Endothelial cell of umbilical vein (primary cell): ENCODE measurements at regions of chr2 and their contacts with region 1.

Region 1: GRCh38 chr2:44479122-44479887 is 117.6 kb downstream of the CAMKMT start:
- DNase-seq: peak; percentile 89
- H3K4me3 ChIP-seq: no peak overlapping the region
- H3K27ac ChIP-seq: no peak overlapping the region
- H3K4me1 ChIP-seq: no peaks in the 10 kb centered on the region
- H3K27me3 ChIP-seq: no peaks in the 10 kb centered on the region
- CTCF ChIP-seq: peak; percentile 97 to 99
- POLR2A ChIP-seq: no peak

Region 2: GRCh38 chr2:44044281-44044720 is 435.0 kb before region 1 on chr2:
- CTCF ChIA-PET with region 1: interaction called, 58 read pairs
- POLR2A ChIA-PET with region 1: no interaction called
- dilution Hi-C with region 1: no loop called
- intact Hi-C with region 1: loop called (anchors 1 kb)
- DNase-seq: peak; percentile 78
- H3K4me3 ChIP-seq: no peak overlapping the region
- H3K27ac ChIP-seq: no peak overlapping the region
- H3K4me1 ChIP-seq: no peaks in the 10 kb centered on the region
- H3K27me3 ChIP-seq: peaks cover 4 to 5% of the 10 kb centered on the region in 2 experiments
- CTCF ChIP-seq: peak; percentile 87 to 95
- POLR2A ChIP-seq: no peak

Region 3: GRCh38 chr2:44320832-44321231 is 158.5 kb before region 1 on chr2:
- CTCF ChIA-PET with region 1: no interaction called
- POLR2A ChIA-PET with region 1: no interaction called
- dilution Hi-C with region 1: no loop called
- intact Hi-C with region 1: no loop called
- DNase-seq: no peak
- H3K4me3 ChIP-seq: no peak overlapping the region
- H3K27ac ChIP-seq: no peak overlapping the region
- H3K4me1 ChIP-seq: no peaks in the 10 kb centered on the region
- H3K27me3 ChIP-seq: no peaks in the 10 kb centered on the region
- CTCF ChIP-seq: no peak
- POLR2A ChIP-seq: no peak

Region 4: GRCh38 chr2:44429034-44429433 is 50.3 kb before region 1 on chr2:
- CTCF ChIA-PET with region 1: interaction called, 14 read pairs
- POLR2A ChIA-PET with region 1: no interaction called
- dilution Hi-C with region 1: no loop called
- intact Hi-C with region 1: no loop called
- DNase-seq: no peak
- H3K4me3 ChIP-seq: no peak overlapping the region
- H3K27ac ChIP-seq: no peak overlapping the region
- H3K4me1 ChIP-seq: no peaks in the 10 kb centered on the region
- H3K27me3 ChIP-seq: no peaks in the 10 kb centered on the region
- CTCF ChIP-seq: no peak
- POLR2A ChIP-seq: no peak

Region 5: GRCh38 chr2:44515416-44515815 is 36.1 kb after region 1 on chr2:
- CTCF ChIA-PET with region 1: interaction called, 13 read pairs
- POLR2A ChIA-PET with region 1: no interaction called
- dilution Hi-C with region 1: no loop called
- intact Hi-C with region 1: no loop called
- DNase-seq: no peak
- H3K4me3 ChIP-seq: no peak overlapping the region
- H3K27ac ChIP-seq: no peak overlapping the region
- H3K4me1 ChIP-seq: no peaks in the 10 kb centered on the region
- H3K27me3 ChIP-seq: no peaks in the 10 kb centered on the region
- CTCF ChIP-seq: no peak
- POLR2A ChIP-seq: no peak

Region 6: DNA sequence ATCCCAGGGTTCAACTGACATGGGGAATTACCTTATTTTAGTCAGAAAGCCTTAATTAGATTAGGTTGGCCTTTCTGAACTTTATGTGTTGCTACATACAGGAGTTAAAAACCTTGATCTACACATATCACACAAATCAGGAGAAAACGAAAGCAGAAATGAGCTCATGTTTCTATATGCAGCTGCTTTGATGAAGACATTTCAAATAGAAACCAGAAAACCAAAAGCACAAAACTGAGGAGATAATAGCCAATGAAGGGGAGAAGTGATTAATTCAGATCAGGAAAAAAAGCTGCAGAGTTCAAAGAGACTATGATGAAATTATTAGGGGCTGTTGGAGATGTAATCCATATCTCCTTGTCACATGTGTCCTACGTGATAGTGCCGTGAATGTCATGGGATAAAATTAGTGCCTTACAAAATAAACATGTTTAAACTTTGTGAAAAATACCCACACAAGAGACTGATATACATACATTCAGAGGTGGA is 137.4 kb after region 1 on chr2:
- CTCF ChIA-PET with region 1: interaction called, 11 read pairs
- POLR2A ChIA-PET with region 1: no interaction called
- dilution Hi-C with region 1: no loop called
- intact Hi-C with region 1: no loop called
- DNase-seq: no peak
- H3K4me3 ChIP-seq: no peak overlapping the region
- H3K27ac ChIP-seq: no peak overlapping the region
- H3K4me1 ChIP-seq: no peaks in the 10 kb centered on the region
- H3K27me3 ChIP-seq: no peaks in the 10 kb centered on the region
- CTCF ChIP-seq: no peak
- POLR2A ChIP-seq: no peak

Region 7: GRCh38 chr2:44707945-44708660 is 228.8 kb after region 1 on chr2:
- CTCF ChIA-PET with region 1: interaction called, 89 read pairs
- POLR2A ChIA-PET with region 1: no interaction called
- dilution Hi-C with region 1: no loop called
- intact Hi-C with region 1: no loop called
- DNase-seq: peak; percentile 45
- H3K4me3 ChIP-seq: no peak overlapping the region
- H3K27ac ChIP-seq: no peak overlapping the region
- H3K4me1 ChIP-seq: peaks cover 5% of the 10 kb centered on the region
- H3K27me3 ChIP-seq: no peaks in the 10 kb centered on the region
- CTCF ChIP-seq: no peak
- POLR2A ChIP-seq: no peak

Region 8: GRCh38 chr2:44770221-44771195 is 291.2 kb after region 1 on chr2:
- CTCF ChIA-PET with region 1: interaction called, 21 read pairs
- POLR2A ChIA-PET with region 1: no interaction called
- dilution Hi-C with region 1: no loop called
- intact Hi-C with region 1: no loop called
- DNase-seq: no peak
- H3K4me3 ChIP-seq: no peak overlapping the region
- H3K27ac ChIP-seq: no peak overlapping the region
- H3K4me1 ChIP-seq: no peaks in the 10 kb centered on the region
- H3K27me3 ChIP-seq: peaks cover 13 to 25% of the 10 kb centered on the region in 2 experiments
- CTCF ChIP-seq: no peak
- POLR2A ChIP-seq: no peak

Region 9: GRCh38 chr2:46315103-46315890 is 1836.0 kb after region 1 on chr2:
- CTCF ChIA-PET with region 1: no interaction called
- POLR2A ChIA-PET with region 1: no interaction called
- dilution Hi-C with region 1: no loop called
- intact Hi-C with region 1: no loop called
- DNase-seq: peak; percentile 97
- H3K4me3 ChIP-seq: no peak overlapping the region
- H3K27ac ChIP-seq: peak overlapping the region; percentile 80
- H3K4me1 ChIP-seq: peaks cover 44% of the 10 kb centered on the region
- H3K27me3 ChIP-seq: no peaks in the 10 kb centered on the region
- CTCF ChIP-seq: no peak
- POLR2A ChIP-seq: peak; percentile 69